ENCODE measurements at regions of chr14 and their contacts with region 1.

Region 1: DNA sequence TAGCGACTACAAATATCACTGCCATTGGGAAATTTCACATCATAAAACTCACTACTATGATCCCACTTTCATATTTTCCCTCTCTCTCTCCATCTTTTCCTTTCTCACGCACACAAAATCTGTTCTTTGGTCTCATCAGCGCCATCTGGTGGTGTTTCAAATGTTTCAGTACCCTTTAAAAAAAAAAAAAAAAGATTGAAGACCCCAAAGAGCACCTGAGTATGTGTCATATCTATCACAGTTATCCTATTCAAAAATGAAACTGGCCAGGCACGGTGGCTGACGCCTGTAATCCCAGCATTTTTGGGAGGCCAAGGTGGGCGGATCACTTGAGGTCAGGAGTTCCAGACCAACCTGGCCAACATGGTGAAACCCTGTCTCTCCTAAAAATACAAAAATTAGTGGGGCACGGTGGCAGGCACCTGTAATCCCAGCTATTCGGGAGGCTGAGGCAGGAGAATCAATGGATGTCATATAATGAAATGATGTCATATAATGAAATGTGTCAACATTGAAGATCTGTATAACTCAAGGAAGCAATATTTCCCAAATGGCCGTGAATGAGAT is 72.4 kb downstream of the TTC9 start:
- DNase-seq: peak; percentile 22
- ATAC-seq: peak; percentile 47
- H3K4me3 Mint-ChIP-seq: peak overlapping the region; percentile 5
- H3K27ac Mint-ChIP-seq: peak overlapping the region; percentile 2
- H3K4me1 Mint-ChIP-seq: peaks cover 31% of the 10 kb centered on the region
- H3K27me3 Mint-ChIP-seq: no peaks in the 10 kb centered on the region
- CTCF ChIP-seq: peak; percentile 87

Region 2: GRCh38 chr14:70148911-70149595 is 565.1 kb before region 1 on chr14:
- CTCF ChIA-PET with region 1: no interaction called
- POLR2A ChIA-PET with region 1: no interaction called
- intact Hi-C with region 1: no loop called
- DNase-seq: no peak
- ATAC-seq: no peak
- H3K4me3 Mint-ChIP-seq: no peak overlapping the region
- H3K27ac Mint-ChIP-seq: no peak overlapping the region
- H3K4me1 Mint-ChIP-seq: no peaks in the 10 kb centered on the region
- H3K27me3 Mint-ChIP-seq: no peaks in the 10 kb centered on the region
- CTCF ChIP-seq: no peak

Region 3: DNA sequence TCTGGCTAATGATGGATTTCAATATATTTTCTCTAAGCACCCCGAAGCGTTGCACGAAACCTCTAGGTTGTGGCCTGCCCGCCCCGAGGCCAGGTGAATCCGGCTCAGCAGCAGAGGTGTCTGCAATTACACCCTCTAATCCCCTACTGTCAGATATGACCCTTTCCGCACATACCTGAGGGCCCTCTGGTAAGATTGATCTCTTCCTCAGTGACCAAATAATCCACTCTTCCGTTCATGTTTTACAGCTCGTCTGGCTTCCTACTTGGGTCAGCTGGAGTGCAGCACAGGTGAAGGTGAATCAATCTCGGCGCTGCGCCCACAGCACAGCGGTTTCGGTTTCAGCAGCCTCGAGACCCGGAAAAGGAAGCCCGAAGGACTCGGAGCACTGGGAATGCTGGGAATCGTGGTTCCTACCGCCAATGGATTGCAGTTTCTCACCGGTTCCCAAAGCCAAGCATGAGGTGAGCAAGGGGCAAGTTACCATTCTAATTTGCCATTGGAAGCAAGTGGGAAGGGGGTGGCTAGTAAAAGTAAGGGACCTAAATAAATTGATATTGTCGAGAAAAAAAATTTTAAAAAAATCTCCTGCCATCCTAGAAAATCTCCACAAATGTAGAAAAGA is 297.3 kb before region 1 on chr14 and contains the start of gene SYNJ2BP:
- CTCF ChIA-PET with region 1: no interaction called
- POLR2A ChIA-PET with region 1: no interaction called
- intact Hi-C with region 1: loop called (anchors 10 kb)
- DNase-seq: peak; percentile 34
- ATAC-seq: peak; percentile 79
- H3K4me3 Mint-ChIP-seq: peak within 1 kb of the TSS; percentile 92
- H3K27ac Mint-ChIP-seq: peak within 1 kb of the TSS; percentile 77
- H3K4me1 Mint-ChIP-seq: peaks cover 27% of the 10 kb centered on the region
- H3K27me3 Mint-ChIP-seq: no peaks in the 10 kb centered on the region
- CTCF ChIP-seq: no peak
- total RNA-seq, gene SYNJ2BP: 14.3 and 16.5 TPM in 2 replicates

Region 4: DNA sequence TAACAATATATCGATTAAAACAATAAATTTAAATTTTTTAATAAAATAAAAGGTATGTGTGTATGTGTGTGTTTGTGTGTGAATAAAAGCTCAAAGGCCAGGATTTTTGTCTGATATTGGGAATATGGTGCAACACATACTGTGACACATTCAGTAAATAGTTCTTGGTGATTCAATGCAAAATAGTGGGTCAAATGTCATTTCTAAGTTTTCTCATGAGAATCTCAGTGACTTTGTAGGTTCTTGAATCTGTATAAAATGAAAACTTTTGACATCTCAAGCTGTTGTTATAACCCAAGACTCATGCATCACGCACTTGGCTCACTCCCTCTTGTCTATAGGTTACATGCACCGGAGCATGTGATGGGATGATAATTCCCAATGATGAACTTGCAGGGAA is 97.5 kb before region 1 on chr14:
- CTCF ChIA-PET with region 1: interaction called, 124 read pairs
- POLR2A ChIA-PET with region 1: interaction called, 7 read pairs
- intact Hi-C with region 1: no loop called
- DNase-seq: no peak
- ATAC-seq: no peak
- H3K4me3 Mint-ChIP-seq: no peak overlapping the region
- H3K27ac Mint-ChIP-seq: no peak overlapping the region
- H3K4me1 Mint-ChIP-seq: no peaks in the 10 kb centered on the region
- H3K27me3 Mint-ChIP-seq: no peaks in the 10 kb centered on the region
- CTCF ChIP-seq: no peak

Region 5: DNA sequence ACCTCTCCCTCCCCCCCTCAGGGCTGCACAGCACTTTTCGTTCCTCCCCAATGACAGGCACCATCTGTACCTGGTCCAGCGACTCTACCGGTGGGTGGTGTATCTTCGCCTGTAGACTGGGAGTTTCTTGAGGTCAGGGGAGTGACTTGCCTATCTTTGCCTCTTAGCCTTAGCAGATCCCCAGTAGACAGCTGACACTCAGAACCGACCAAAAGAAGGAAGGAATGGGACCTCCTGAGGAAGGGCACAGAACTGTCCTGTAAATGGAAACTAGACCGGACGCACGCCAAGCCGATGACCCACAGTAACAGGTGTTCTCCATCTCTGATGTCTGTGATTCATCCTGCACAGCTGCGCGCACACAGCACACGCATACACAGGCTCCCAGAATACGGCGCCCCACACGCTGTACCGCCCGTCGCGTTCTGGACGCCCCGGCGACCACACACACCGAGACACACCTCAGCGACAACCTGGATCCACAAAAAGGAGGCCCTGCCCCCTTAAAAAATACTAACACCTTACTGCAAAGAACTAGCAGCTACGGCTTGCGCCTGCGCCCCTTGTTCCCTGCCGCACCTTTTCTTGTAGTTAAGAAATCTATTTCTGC is 73.1 kb before region 1 on chr14:
- CTCF ChIA-PET with region 1: interaction called, 26 read pairs
- POLR2A ChIA-PET with region 1: interaction called, 8 read pairs
- intact Hi-C with region 1: loop called (anchors 1 kb)
- DNase-seq: peak; percentile 51
- ATAC-seq: peak; percentile 64
- H3K4me3 Mint-ChIP-seq: peak overlapping the region; percentile 97
- H3K27ac Mint-ChIP-seq: peak overlapping the region; percentile 97
- H3K4me1 Mint-ChIP-seq: peaks cover 70% of the 10 kb centered on the region
- H3K27me3 Mint-ChIP-seq: no peaks in the 10 kb centered on the region
- CTCF ChIP-seq: no peak

Region 6: DNA sequence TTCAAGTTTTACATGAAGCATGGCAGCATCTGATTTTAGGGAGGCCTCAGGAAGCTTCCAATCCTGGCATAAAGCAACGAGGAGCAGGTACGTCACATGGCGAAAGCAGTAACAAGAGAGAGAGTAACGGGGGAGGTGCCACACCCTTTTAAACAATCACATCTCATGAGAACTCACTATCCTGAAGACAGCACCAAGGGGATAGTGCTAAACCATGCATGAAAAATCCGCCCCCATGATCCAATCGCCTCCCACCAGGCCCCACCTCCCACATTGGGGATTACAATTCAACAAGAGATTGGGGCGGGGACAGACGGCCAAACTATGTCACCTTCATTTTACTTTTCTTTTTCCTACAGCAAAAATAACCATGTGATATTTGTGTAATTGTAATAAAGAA is 102.4 kb after region 1 on chr14:
- CTCF ChIA-PET with region 1: interaction called, 27 read pairs
- POLR2A ChIA-PET with region 1: no interaction called
- intact Hi-C with region 1: loop called (anchors 1 kb)
- DNase-seq: no peak
- ATAC-seq: no peak
- H3K4me3 Mint-ChIP-seq: no peak overlapping the region
- H3K27ac Mint-ChIP-seq: no peak overlapping the region
- H3K4me1 Mint-ChIP-seq: peaks cover 26% of the 10 kb centered on the region
- H3K27me3 Mint-ChIP-seq: peaks cover 14% of the 10 kb centered on the region
- CTCF ChIP-seq: no peak

Region 7: DNA sequence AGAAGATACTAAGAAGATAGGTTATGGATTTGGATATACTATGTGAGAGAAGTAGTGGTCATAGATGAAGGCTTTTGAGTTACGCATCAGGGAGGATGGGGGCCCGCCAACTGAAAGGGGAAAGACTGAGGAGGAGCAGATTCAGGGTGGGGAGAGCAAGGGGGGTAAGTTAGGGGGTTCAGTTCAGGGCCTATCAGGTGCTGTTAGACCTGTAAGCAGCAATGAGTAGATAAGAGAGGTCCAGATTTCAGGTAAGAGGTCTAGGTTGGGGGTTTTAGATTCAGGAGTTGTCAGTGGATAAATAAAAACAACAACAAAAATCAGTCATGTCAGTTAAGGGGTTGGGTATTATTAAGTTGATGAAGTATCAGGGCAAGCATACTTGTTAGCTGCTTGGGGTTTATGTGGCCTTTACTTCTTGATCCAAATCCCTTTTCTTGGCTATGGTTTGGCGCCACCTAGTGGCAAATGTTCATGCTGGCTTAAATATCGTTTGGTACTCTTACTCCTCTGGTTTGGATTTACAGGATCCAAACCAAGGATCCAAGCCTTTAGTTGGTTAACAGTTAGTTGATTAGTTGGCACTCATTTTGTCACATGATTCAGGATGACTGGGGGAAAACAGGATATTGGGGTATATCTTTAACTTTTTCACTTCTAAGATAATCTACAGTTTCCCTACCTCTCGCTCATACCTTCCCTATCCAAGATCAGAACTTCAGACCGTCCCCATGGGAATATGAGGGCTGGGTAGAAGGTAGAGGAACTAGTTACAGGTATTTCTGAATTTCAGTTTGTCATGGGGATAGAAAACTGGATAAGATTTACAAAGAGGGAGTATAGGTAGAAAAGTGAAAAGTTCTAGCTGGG is 258.2 kb after region 1 on chr14:
- CTCF ChIA-PET with region 1: no interaction called
- POLR2A ChIA-PET with region 1: no interaction called
- intact Hi-C with region 1: loop called (anchors 1 kb)
- DNase-seq: peak; percentile 49
- ATAC-seq: peak; percentile 62
- H3K4me3 Mint-ChIP-seq: no peak overlapping the region
- H3K27ac Mint-ChIP-seq: no peak overlapping the region
- H3K4me1 Mint-ChIP-seq: peaks cover 5% of the 10 kb centered on the region
- H3K27me3 Mint-ChIP-seq: no peaks in the 10 kb centered on the region
- CTCF ChIP-seq: peak; percentile 59

Region 8: DNA sequence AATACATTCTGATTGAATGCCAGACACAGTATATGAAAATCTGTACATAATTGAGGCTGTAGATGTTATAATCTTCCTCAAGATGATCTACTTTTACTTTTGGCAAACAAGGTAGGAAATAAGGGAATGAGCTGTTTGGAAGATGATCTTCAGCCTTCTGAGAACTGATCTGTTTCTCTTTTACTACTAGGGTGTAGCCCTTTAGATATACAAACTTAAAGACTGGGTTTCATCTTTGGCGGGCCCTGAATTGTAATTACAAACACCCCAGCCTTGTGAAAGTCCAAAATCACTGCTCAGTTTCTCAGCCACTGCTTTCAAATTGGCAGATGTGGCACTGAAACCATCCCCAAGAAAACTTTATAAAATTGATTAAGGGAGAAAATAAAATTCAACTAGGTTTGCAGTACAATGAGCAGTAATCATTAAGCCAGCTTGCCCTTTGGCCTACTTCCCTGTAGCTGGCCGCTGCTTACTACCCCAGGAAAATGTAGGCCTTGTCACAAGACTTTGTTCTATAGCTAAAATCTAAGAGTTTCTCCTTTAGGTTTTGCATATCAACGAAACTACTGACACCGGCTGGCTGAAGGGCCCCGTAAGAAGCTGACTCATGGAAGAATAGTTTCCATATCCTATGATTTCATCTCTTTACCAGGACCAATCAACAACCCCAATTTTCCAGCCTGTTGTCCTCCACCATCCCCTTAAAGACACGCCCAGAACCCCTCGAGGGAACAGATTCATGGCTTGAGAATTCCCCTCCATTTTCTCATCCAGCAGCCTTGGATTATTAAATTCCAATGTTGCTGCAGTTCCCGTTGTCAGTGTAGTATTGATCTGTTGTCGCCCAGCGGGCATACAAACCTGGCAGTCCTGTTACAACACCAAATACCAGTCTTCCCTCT is 404.0 kb after region 1 on chr14:
- CTCF ChIA-PET with region 1: no interaction called
- POLR2A ChIA-PET with region 1: no interaction called
- intact Hi-C with region 1: no loop called
- DNase-seq: no peak
- ATAC-seq: peak; percentile 59
- H3K4me3 Mint-ChIP-seq: peak overlapping the region; percentile 41
- H3K27ac Mint-ChIP-seq: peak overlapping the region; percentile 93
- H3K4me1 Mint-ChIP-seq: peaks cover 40% of the 10 kb centered on the region
- H3K27me3 Mint-ChIP-seq: no peaks in the 10 kb centered on the region
- CTCF ChIP-seq: no peak

Region 9: GRCh38 chr14:71130491-71131179 is 416.5 kb after region 1 on chr14:
- CTCF ChIA-PET with region 1: no interaction called
- POLR2A ChIA-PET with region 1: no interaction called
- intact Hi-C with region 1: no loop called
- DNase-seq: no peak
- ATAC-seq: no peak
- H3K4me3 Mint-ChIP-seq: no peak overlapping the region
- H3K27ac Mint-ChIP-seq: no peak overlapping the region
- H3K4me1 Mint-ChIP-seq: peaks cover 11% of the 10 kb centered on the region
- H3K27me3 Mint-ChIP-seq: no peaks in the 10 kb centered on the region
- CTCF ChIP-seq: no peak

Region 10: GRCh38 chr14:71165121-71166031 is 451.2 kb after region 1 on chr14:
- CTCF ChIA-PET with region 1: no interaction called
- POLR2A ChIA-PET with region 1: no interaction called
- intact Hi-C with region 1: no loop called
- DNase-seq: no peak
- ATAC-seq: no peak
- H3K4me3 Mint-ChIP-seq: no peak overlapping the region
- H3K27ac Mint-ChIP-seq: no peak overlapping the region
- H3K4me1 Mint-ChIP-seq: peaks cover 10% of the 10 kb centered on the region
- H3K27me3 Mint-ChIP-seq: peaks cover 13% of the 10 kb centered on the region
- CTCF ChIP-seq: no peak